Activated CD4-positive, alpha-beta memory T cell treated with anti-CD3 and anti-CD28 coated beads, Interleukin-2, amount 10 ng/mL, durations not matched to agents 7 days and 5 days (primary cell): ENCODE measurements at regions of chr2 and their contacts with region 1.

Region 1: GRCh38 chr2:96960153-96960961 is 26.0 kb downstream of the FAM178B start:
- DNase-seq: peak; percentile 87
- H3K4me3 Mint-ChIP-seq: peak overlapping the region; percentile 14
- H3K27ac Mint-ChIP-seq: peak overlapping the region; percentile 92
- H3K4me1 Mint-ChIP-seq: peaks cover 54% of the 10 kb centered on the region
- H3K27me3 Mint-ChIP-seq: no peaks in the 10 kb centered on the region

Region 2: GRCh38 chr2:96753704-96754282 is 206.6 kb before region 1 on chr2:
- CTCF ChIA-PET with region 1: no interaction called
- POLR2A ChIA-PET with region 1: no interaction called
- DNase-seq: no peak
- H3K4me3 Mint-ChIP-seq: no peak overlapping the region
- H3K27ac Mint-ChIP-seq: no peak overlapping the region
- H3K4me1 Mint-ChIP-seq: peaks cover under 1% of the 10 kb centered on the region
- H3K27me3 Mint-ChIP-seq: peaks cover 8% of the 10 kb centered on the region

Region 3: GRCh38 chr2:96816128-96816835 is 144.1 kb before region 1 on chr2 and contains the start of gene CNNM3:
- CTCF ChIA-PET with region 1: interaction called, 19 read pairs
- POLR2A ChIA-PET with region 1: interaction called, 6 read pairs
- DNase-seq: peak; percentile 97
- H3K4me3 Mint-ChIP-seq: peak within 1 kb of the TSS; percentile 91
- H3K27ac Mint-ChIP-seq: peak within 1 kb of the TSS; percentile 72
- H3K4me1 Mint-ChIP-seq: peaks cover 59% of the 10 kb centered on the region
- H3K27me3 Mint-ChIP-seq: no peaks in the 10 kb centered on the region
- total RNA-seq, gene CNNM3: 26.6 to 28.5 TPM

Region 4: GRCh38 chr2:96868555-96869280 is 91.6 kb before region 1 on chr2:
- CTCF ChIA-PET with region 1: interaction called, 13 read pairs
- POLR2A ChIA-PET with region 1: interaction called, 4 read pairs
- DNase-seq: peak; percentile 75
- H3K4me3 Mint-ChIP-seq: peak overlapping the region; percentile 82
- H3K27ac Mint-ChIP-seq: peak overlapping the region; percentile 71
- H3K4me1 Mint-ChIP-seq: peaks cover 35% of the 10 kb centered on the region
- H3K27me3 Mint-ChIP-seq: peaks cover 10% of the 10 kb centered on the region

Region 5: DNA sequence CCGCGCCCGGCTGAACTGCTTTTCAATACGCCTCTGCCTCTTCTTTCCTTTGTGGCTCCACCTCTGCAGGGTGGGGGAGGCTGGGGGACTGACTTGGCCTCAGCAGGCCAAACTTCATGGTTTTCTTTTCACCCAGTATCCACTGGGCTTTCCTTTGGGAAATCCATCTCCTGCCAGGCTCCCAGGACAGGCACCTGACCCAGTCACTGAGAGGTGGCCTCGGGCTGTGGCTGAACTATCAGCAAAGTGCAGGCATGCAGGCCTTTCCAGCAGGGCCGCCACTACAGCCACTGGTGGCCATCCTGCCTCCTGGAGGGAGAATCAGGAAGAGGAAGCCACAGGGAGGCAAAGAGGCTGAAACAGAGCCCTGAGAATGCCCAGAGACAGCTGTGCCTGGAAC is 57.0 kb before region 1 on chr2:
- CTCF ChIA-PET with region 1: no interaction called
- POLR2A ChIA-PET with region 1: no interaction called
- DNase-seq: no peak
- H3K4me3 Mint-ChIP-seq: no peak overlapping the region
- H3K27ac Mint-ChIP-seq: no peak overlapping the region
- H3K4me1 Mint-ChIP-seq: no peaks in the 10 kb centered on the region
- H3K27me3 Mint-ChIP-seq: no peaks in the 10 kb centered on the region